ENCODE measurements at regions of chr12 and their contacts with region 1.

Region 1: GRCh38 chr12:50918584-50919316 is 33.6 kb upstream of the HIGD1C start:
- DNase-seq: no peak
- ATAC-seq: no peak
- H3K4me3 ChIP-seq: no peak overlapping the region
- H3K27ac ChIP-seq: no peak overlapping the region
- H3K4me1 ChIP-seq: no peaks in the 10 kb centered on the region
- H3K27me3 ChIP-seq: no peaks in the 10 kb centered on the region
- CTCF ChIP-seq: no peak

Region 2: DNA sequence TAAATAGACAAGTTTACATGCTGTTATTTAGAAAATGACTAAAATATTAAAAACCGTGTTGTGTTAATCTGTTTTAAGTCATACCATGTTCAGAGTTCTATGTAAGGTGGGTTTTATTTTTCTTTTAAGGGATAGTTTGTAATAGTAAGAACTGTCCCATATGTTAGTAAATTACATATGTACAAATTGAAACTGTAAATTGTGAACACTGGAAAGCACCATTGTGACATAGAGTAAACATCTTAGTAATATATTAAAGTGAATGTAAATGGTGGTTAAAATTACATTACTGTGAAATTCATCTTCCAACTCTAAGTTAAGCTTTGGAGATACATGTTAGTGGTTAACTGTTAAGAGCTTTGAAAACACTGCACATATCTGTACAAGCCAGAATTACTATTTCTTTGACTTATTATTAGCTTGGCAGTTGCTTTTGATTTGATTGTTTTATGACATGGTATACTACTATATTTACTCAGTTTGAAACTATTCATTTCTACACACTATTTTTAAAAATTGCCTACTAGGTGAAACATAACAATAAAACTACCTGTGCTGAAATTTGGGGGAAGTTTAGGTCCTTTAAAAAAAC is 441.4 kb before region 1 on chr12:
- CTCF ChIA-PET with region 1: no interaction called
- POLR2A ChIA-PET with region 1: interaction called, 10 read pairs
- in situ Hi-C with region 1: no loop called
- intact Hi-C with region 1: no loop called
- DNase-seq: no peak
- ATAC-seq: no peak
- H3K4me3 ChIP-seq: no peak overlapping the region
- H3K27ac ChIP-seq: no peak overlapping the region
- H3K4me1 ChIP-seq: no peaks in the 10 kb centered on the region
- H3K27me3 ChIP-seq: no peaks in the 10 kb centered on the region
- CTCF ChIP-seq: no peak